ENCODE measurements at regions of chr14 and their contacts with region 1.

Region 1: DNA sequence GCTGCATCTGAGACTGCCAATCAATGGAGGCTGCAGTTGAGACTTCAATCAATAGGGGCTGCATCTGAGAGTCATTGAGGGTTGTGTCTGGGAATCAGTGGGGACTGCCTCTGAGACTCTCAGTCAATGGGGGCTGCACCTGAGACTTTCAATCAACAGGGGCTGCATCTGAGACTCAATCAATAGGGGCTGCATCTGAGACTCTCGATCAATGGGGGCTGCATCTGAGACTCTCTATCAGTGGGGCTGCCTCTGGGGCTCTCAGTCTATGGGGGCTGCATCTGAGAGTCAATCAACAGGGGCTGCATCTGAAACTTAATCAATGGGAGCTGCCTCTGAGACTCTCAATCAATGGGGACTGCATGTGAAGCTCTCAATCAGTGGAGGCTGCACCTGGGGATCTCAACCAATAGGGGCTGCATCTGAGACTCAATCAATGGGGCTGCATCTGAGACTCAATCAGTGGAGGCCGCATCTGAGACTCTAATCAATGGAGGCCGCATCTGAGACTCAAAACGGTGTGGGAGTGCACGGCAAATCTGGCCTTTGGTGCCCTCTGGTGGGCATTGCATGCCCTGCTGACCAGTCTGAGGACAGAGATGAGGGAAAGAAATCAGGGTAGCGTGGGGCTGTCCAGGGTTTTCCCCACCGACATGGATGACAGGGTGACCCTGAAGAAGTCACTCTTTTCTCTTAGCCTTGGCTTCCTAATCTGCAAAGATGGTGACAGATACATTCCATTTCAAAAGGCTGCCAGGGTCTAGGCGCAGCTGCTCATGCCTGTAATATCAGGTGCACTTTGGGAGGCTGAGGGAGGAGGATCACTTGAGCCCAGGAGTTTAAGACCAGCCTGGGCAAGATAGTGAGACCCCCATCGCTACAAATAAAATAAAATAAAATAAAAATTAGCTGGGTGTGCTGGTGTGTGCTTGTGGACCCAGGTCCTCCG is 41.3 kb upstream of the EIF5 start:
- DNase-seq: peak; percentile 39 to 85
- ATAC-seq: peak; percentile 97

Region 2: DNA sequence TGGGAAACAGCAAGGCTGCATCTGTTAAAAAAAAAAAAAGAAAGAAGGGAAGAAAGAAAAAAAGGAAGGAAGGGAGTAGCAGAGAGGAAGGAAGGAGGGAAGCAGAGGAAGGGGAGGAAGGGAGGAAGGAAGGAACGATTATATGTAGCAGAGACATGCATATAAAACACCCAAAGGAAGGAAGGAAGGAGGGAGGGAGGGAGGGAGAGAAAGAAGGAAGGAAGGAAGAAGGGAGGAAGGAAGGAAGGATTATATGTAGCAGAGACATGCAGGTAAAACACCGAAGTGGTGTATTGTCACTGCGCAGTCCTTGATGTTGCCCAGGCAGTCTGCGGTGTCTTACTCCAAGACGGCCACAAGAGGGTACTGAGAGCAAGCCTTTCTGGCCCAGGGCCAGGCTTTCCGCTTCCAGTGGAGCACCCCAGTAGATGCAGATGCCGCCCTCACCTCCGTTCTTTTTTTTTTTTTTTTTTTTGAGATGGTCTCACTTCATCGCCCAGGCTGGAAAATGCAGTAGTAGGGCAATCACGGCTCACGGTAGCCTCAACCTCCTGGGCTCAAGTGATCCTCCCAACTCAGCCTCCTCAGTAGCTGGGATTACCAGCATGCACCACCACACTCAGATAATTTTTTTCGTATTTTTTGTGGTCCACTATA is 214.5 kb before region 1 on chr14:
- intact Hi-C with region 1: loop called in 1 of 2 experiments (anchors 5 kb)
- DNase-seq: peak in 1 of 2 donors; percentile 87
- ATAC-seq: peak; percentile 59

Region 3: DNA sequence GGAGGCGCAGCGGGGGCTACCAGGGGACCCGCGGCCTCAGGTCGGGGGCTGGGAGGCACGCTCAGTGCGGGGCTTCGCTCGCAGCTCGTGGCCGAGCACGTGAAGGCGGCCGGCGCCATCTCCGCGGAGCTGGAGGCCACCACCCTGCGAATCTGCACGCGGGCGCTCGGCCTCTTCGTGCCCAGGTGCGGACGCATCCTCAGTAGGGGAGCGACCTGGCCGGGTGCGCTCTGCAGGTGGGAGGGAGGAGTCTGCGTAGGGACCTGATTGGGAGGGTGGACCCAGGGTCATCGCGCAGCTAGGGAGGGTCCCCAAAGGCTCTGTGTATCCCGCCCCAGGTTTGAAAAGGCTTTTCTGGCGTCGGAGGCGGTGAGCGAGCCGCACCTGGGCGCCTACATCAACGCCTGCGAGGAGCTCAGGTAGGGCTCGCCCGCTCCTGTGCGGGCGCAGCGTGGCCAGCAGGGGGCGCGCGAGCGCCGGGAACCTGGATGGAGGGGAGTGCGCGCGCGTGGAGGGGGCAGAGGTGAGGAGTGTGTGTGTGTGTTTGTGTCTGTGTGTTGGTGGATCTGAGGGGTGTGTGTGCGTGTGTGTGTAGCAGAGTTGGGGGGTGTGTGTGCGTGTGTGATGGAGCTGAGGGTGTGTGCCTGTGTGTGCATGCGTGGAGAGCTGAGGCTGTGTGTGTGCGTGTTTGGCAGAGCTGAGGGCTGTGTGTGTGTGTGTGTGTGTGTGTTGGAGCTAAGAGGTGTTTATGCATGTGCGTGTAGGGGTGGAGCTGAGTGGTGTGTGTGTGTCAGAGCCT is 187.8 kb before region 1 on chr14:
- intact Hi-C with region 1: loop called (anchors 5 to 10 kb)
- DNase-seq: peak in 1 of 2 donors; percentile 79
- ATAC-seq: peak; percentile 75

Region 4: DNA sequence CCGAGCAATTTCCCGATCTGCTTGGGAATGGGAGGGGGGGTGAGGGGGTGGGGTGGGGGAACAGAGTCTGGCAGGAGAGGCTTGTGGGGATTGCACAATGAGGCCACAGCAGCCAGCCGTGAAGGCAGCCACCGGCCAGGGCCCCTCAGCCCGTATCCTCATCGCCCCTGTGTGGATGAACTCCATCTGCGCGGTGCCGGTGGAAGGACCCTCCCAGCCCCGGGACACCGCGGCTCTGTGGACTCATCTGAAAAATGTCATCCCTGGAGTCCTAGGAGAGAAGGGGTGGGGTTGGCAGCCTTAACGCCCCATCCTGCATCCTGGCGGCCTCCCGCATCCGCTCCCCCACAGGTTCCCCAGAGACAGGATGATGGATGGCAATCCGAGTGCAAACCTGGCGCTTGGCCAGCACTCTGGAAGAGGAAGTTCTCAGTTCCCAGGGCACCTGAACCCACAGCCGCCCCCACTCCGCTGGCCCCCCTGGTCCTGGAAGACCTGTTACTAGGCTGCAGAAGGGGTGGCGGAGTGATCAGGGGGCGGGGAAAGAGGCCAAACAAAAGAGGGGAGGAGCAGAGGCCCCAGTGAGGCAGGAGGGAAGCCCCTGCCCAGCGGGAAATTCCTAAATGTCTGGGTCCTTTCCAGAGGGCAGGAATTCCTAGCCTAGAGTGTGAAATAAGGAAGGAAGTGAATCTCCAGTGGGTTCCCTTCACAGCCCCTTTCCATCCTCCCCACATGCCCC is 170.7 kb before region 1 on chr14:
- intact Hi-C with region 1: no loop called
- DNase-seq: peak; percentile 80 to 83
- ATAC-seq: peak; percentile 46

Region 5: DNA sequence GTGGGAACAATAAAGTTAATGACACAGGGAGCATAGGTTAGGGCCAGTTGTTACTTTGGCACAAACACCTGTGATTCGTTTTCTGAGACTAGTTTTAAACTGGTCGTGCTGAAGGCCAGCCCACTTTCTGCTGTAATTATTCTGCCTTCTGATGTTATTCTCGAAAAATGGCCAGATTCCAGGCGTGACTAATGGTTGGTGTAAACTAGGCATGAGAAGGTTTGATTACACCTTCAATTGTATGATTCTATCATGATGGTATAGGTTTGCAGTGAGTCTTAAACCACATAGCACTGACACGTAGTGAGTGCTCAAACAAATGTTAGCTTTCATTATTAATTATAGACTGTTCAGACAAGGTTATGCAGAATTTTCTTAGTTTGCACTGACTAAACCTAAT is 190.9 kb after region 1 on chr14:
- intact Hi-C with region 1: no loop called
- DNase-seq: no peak
- ATAC-seq: no peak

Measured in left colon (tissue), 2 donors.